CD4-positive, alpha-beta T cell (primary cell): ENCODE measurements at regions of chr10 and their contacts with region 1.

Region 1: GRCh38 chr10:29658984-29659965 is 24.5 kb upstream of the SVIL start:
- DNase-seq: peak; percentile 26 to 95 (median 46)
- ATAC-seq: peak; percentile 94
- H3K4me3 ChIP-seq: peak overlapping the region; percentile 1
- H3K4me3 Mint-ChIP-seq: peak overlapping the region; percentile 70
- H3K27ac ChIP-seq: peak overlapping the region; percentile 55 to 56
- H3K27ac Mint-ChIP-seq: peak overlapping the region; percentile 89
- H3K4me1 ChIP-seq: peaks cover 29% of the 10 kb centered on the region
- H3K4me1 Mint-ChIP-seq: peaks cover 44% of the 10 kb centered on the region
- H3K27me3 ChIP-seq: no peaks in the 10 kb centered on the region
- H3K27me3 Mint-ChIP-seq: no peaks in the 10 kb centered on the region
- CTCF ChIP-seq: peak; percentile 48

Region 2: GRCh38 chr10:29590915-29591650 is 68.2 kb before region 1 on chr10:
- CTCF ChIA-PET with region 1: interaction called, 6 read pairs
- POLR2A ChIA-PET with region 1: no interaction called
- intact Hi-C with region 1: loop called (anchors 5 kb)
- DNase-seq: no peak
- ATAC-seq: no peak
- H3K4me3 ChIP-seq: no peak overlapping the region
- H3K4me3 Mint-ChIP-seq: no peak overlapping the region
- H3K27ac ChIP-seq: no peak overlapping the region
- H3K27ac Mint-ChIP-seq: no peak overlapping the region
- H3K4me1 ChIP-seq: peaks cover 7% of the 10 kb centered on the region
- H3K4me1 Mint-ChIP-seq: peaks cover 25% of the 10 kb centered on the region
- H3K27me3 ChIP-seq: no peaks in the 10 kb centered on the region
- H3K27me3 Mint-ChIP-seq: no peaks in the 10 kb centered on the region
- CTCF ChIP-seq: peak; percentile 46

Region 3: DNA sequence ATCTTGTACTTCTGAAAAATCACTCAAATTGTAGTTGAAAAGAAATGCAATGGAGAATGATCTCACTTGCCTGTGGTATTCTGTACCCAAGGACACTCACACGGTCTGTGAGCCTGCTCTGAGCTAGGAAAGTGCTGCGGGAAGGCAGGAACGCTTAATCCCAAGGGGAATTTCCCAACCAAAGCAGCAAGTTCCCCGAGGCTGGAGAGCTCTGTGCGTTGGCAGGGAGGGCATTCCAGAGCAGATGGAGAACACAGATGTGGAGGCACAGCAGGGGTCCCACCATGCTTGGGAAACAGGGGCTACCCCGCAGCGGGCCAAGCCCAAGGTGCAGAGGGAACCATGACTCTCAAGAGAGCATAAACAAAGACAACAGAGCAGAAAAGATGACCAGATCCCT is 38.1 kb before region 1 on chr10:
- CTCF ChIA-PET with region 1: no interaction called
- POLR2A ChIA-PET with region 1: no interaction called
- intact Hi-C with region 1: no loop called
- DNase-seq: no peak
- ATAC-seq: no peak
- H3K4me3 ChIP-seq: no peak overlapping the region
- H3K4me3 Mint-ChIP-seq: no peak overlapping the region
- H3K27ac ChIP-seq: no peak overlapping the region
- H3K27ac Mint-ChIP-seq: no peak overlapping the region
- H3K4me1 ChIP-seq: no peaks in the 10 kb centered on the region
- H3K4me1 Mint-ChIP-seq: peaks cover 18% of the 10 kb centered on the region
- H3K27me3 ChIP-seq: no peaks in the 10 kb centered on the region
- H3K27me3 Mint-ChIP-seq: no peaks in the 10 kb centered on the region
- CTCF ChIP-seq: no peak

Region 4: GRCh38 chr10:29635711-29636144 is 23.5 kb before region 1 on chr10:
- CTCF ChIA-PET with region 1: interaction called, 7 read pairs
- POLR2A ChIA-PET with region 1: no interaction called
- intact Hi-C with region 1: loop called (anchors 1 to 2 kb)
- DNase-seq: peak in 7 of 14 experiments; percentile 3 to 62 (median 21)
- ATAC-seq: peak; percentile 49
- H3K4me3 ChIP-seq: no peak overlapping the region
- H3K4me3 Mint-ChIP-seq: peak overlapping the region; percentile 6
- H3K27ac ChIP-seq: peak overlapping the region in 1 of 2 donors; percentile 65
- H3K27ac Mint-ChIP-seq: peak overlapping the region; percentile 78
- H3K4me1 ChIP-seq: peaks cover 32% of the 10 kb centered on the region
- H3K4me1 Mint-ChIP-seq: peaks cover 55% of the 10 kb centered on the region
- H3K27me3 ChIP-seq: no peaks in the 10 kb centered on the region
- H3K27me3 Mint-ChIP-seq: no peaks in the 10 kb centered on the region
- CTCF ChIP-seq: no peak

Region 5: DNA sequence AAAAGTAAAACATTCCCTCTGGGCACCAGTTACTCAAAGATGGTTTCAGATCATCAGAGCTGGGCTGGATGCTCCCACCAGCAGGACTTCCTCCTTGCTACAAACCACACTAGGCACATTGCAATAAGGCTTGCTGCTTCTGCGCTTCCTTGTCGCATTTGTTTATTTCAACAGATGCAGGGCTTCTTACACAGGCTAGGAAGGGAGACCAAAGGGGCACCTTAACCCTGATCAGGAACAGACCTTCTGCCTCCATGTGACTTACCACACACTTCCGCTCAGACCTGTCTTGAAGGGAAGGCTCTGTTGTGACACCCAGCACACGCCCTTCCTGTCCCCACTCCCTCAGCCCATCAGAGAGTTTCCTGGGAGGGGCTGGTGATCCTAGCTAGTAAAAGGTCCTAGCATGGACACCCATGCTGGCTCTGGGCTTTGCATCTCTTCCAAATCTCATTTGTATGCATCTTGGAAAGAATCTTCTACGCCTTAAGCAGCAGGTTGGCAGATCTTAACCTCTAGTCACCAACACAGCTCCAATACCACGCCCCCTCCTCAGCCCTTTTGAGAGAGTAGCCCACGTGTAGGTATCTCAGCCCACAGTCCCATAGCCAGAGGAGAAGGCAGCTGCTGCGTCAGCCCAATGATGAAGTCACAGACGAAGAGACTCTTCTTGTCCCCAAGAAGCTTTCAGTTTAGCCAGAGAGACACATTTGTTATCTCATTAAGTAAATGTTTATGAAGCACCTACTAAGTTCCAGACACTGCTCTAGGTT is 22.6 kb after region 1 on chr10:
- CTCF ChIA-PET with region 1: interaction called, 5 read pairs
- POLR2A ChIA-PET with region 1: interaction called, 6 read pairs
- intact Hi-C with region 1: loop called in 1 of 2 experiments (anchors 1 kb)
- DNase-seq: peak; percentile 36 to 94 (median 60)
- ATAC-seq: peak; percentile 93
- H3K4me3 ChIP-seq: peak overlapping the region; percentile 26
- H3K4me3 Mint-ChIP-seq: peak overlapping the region; percentile 83
- H3K27ac ChIP-seq: peak overlapping the region; percentile 58 to 86
- H3K27ac Mint-ChIP-seq: peak overlapping the region; percentile 93
- H3K4me1 ChIP-seq: peaks cover 70% of the 10 kb centered on the region
- H3K4me1 Mint-ChIP-seq: peaks cover 97% of the 10 kb centered on the region
- H3K27me3 ChIP-seq: no peaks in the 10 kb centered on the region
- H3K27me3 Mint-ChIP-seq: no peaks in the 10 kb centered on the region
- CTCF ChIP-seq: no peak